ENCODE measurements at regions of chr10 and their contacts with region 1.

Region 1: DNA sequence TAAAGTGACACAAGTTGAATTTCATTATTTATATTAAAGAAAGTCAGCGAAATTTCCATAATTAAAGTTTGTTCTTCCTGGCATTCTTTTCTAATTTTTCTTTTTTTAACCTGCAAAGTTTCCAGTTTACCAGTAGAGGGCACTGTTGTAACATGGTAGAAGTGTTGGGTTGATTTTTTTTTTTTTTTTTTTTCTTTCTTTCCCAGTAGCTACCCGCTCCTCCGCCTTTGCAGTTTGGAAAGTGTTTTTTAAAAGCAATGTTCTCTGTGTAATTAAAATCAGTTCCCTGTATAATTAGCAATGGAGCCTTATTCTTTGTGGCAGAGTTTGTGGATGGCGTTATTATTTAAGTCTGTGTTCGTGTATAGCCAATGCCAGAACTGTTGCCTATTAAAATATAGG is 53.7 kb downstream of the TAF3 start:
- DNase-seq: peak; percentile 40
- ATAC-seq: no peak
- H3K4me3 ChIP-seq: no peak overlapping the region
- H3K4me3 Mint-ChIP-seq: peak overlapping the region; percentile 42
- H3K27ac ChIP-seq: no peak overlapping the region
- H3K27ac Mint-ChIP-seq: no peak overlapping the region
- H3K4me1 ChIP-seq: peaks cover 0 to 4% of the 10 kb centered on the region in 2 donors
- H3K4me1 Mint-ChIP-seq: peaks cover 17% of the 10 kb centered on the region
- H3K27me3 ChIP-seq: no peaks in the 10 kb centered on the region
- H3K27me3 Mint-ChIP-seq: no peaks in the 10 kb centered on the region
- CTCF ChIP-seq: peak; percentile 94

Region 2: GRCh38 chr10:9209105-9209798 is 1337.2 kb after region 1 on chr10:
- CTCF ChIA-PET with region 1: interaction called, 23 read pairs
- POLR2A ChIA-PET with region 1: no interaction called
- intact Hi-C with region 1: no loop called
- DNase-seq: peak; percentile 62
- ATAC-seq: peak; percentile 31
- H3K4me3 ChIP-seq: no peak overlapping the region
- H3K4me3 Mint-ChIP-seq: no peak overlapping the region
- H3K27ac ChIP-seq: no peak overlapping the region
- H3K27ac Mint-ChIP-seq: no peak overlapping the region
- H3K4me1 ChIP-seq: no peaks in the 10 kb centered on the region
- H3K4me1 Mint-ChIP-seq: no peaks in the 10 kb centered on the region
- H3K27me3 ChIP-seq: no peaks in the 10 kb centered on the region
- H3K27me3 Mint-ChIP-seq: peaks cover 7% of the 10 kb centered on the region
- CTCF ChIP-seq: peak; percentile 94

Region 3: GRCh38 chr10:9301148-9301547 is 1429.1 kb after region 1 on chr10:
- CTCF ChIA-PET with region 1: no interaction called
- POLR2A ChIA-PET with region 1: no interaction called
- intact Hi-C with region 1: loop called (anchors 2 kb)
- DNase-seq: no peak
- ATAC-seq: no peak
- H3K4me3 ChIP-seq: no peak overlapping the region
- H3K4me3 Mint-ChIP-seq: no peak overlapping the region
- H3K27ac ChIP-seq: no peak overlapping the region
- H3K27ac Mint-ChIP-seq: no peak overlapping the region
- H3K4me1 ChIP-seq: no peaks in the 10 kb centered on the region
- H3K4me1 Mint-ChIP-seq: no peaks in the 10 kb centered on the region
- H3K27me3 ChIP-seq: no peaks in the 10 kb centered on the region
- H3K27me3 Mint-ChIP-seq: peaks cover 13% of the 10 kb centered on the region
- CTCF ChIP-seq: no peak

Measured in B cell (primary cell).